ENCODE measurements at regions of chr2 and their contacts with region 1.

Region 1: GRCh38 chr2:97747716-97748115 is 34.3 kb downstream of the ZAP70 start:
- DNase-seq: no peak
- ATAC-seq: peak; percentile 5 to 21 (median 19)
- H3K4me3 ChIP-seq: no peak overlapping the region
- H3K4me3 Mint-ChIP-seq: peak overlapping the region; percentile 62
- H3K27ac ChIP-seq: peak overlapping the region; percentile 55
- H3K27ac Mint-ChIP-seq: peak overlapping the region; percentile 80 to 94
- H3K4me1 ChIP-seq: peaks cover 56% of the 10 kb centered on the region
- H3K4me1 Mint-ChIP-seq: peaks cover 68 to 80% of the 10 kb centered on the region in 2 donors
- H3K27me3 ChIP-seq: no peaks in the 10 kb centered on the region
- H3K27me3 Mint-ChIP-seq: no peaks in the 10 kb centered on the region
- CTCF ChIP-seq: no peak

Region 2: GRCh38 chr2:97697252-97698235 is 50.2 kb before region 1 on chr2:
- intact Hi-C with region 1: loop called (anchors 1 kb)
- DNase-seq: peak; percentile 89 to 94
- ATAC-seq: peak; percentile 89 to 93 (median 91)
- H3K4me3 ChIP-seq: no peak overlapping the region
- H3K4me3 Mint-ChIP-seq: no peak overlapping the region
- H3K27ac ChIP-seq: no peak overlapping the region
- H3K27ac Mint-ChIP-seq: no peak overlapping the region
- H3K4me1 ChIP-seq: no peaks in the 10 kb centered on the region
- H3K4me1 Mint-ChIP-seq: peaks cover 4 to 5% of the 10 kb centered on the region in 2 donors
- H3K27me3 ChIP-seq: no peaks in the 10 kb centered on the region
- H3K27me3 Mint-ChIP-seq: peaks cover 4 to 10% of the 10 kb centered on the region in 2 donors
- CTCF ChIP-seq: peak; percentile 90

Region 3: GRCh38 chr2:97710596-97711386 is 36.9 kb before region 1 on chr2:
- intact Hi-C with region 1: loop called (anchors 1 kb)
- DNase-seq: peak in 1 of 2 donors; percentile 45
- ATAC-seq: no peak
- H3K4me3 ChIP-seq: no peak overlapping the region
- H3K4me3 Mint-ChIP-seq: no peak overlapping the region
- H3K27ac ChIP-seq: no peak overlapping the region
- H3K27ac Mint-ChIP-seq: peak overlapping the region in 1 of 2 donors; percentile 97
- H3K4me1 ChIP-seq: peaks cover 53% of the 10 kb centered on the region
- H3K4me1 Mint-ChIP-seq: peaks cover 50 to 61% of the 10 kb centered on the region in 2 donors
- H3K27me3 ChIP-seq: no peaks in the 10 kb centered on the region
- H3K27me3 Mint-ChIP-seq: no peaks in the 10 kb centered on the region
- CTCF ChIP-seq: no peak

Region 4: GRCh38 chr2:97718051-97718882 is 29.4 kb before region 1 on chr2:
- intact Hi-C with region 1: loop called (anchors 1 kb)
- DNase-seq: peak; percentile 72 to 88
- ATAC-seq: peak; percentile 65 to 76 (median 76)
- H3K4me3 ChIP-seq: peak overlapping the region; percentile 69
- H3K4me3 Mint-ChIP-seq: peak overlapping the region; percentile 94
- H3K27ac ChIP-seq: peak overlapping the region; percentile 71
- H3K27ac Mint-ChIP-seq: peak overlapping the region; percentile 97
- H3K4me1 ChIP-seq: peaks cover 87% of the 10 kb centered on the region
- H3K4me1 Mint-ChIP-seq: peaks cover 89 to 91% of the 10 kb centered on the region in 2 donors
- H3K27me3 ChIP-seq: no peaks in the 10 kb centered on the region
- H3K27me3 Mint-ChIP-seq: no peaks in the 10 kb centered on the region
- CTCF ChIP-seq: no peak

Region 5: GRCh38 chr2:97761192-97761591 is 13.5 kb after region 1 on chr2:
- intact Hi-C with region 1: no loop called
- DNase-seq: peak; percentile 31 to 67
- ATAC-seq: peak; percentile 77 to 84 (median 78)
- H3K4me3 ChIP-seq: peak overlapping the region; percentile 11
- H3K4me3 Mint-ChIP-seq: peak overlapping the region; percentile 69
- H3K27ac ChIP-seq: peak overlapping the region; percentile 71
- H3K27ac Mint-ChIP-seq: peak overlapping the region; percentile 84 to 87
- H3K4me1 ChIP-seq: peaks cover 40% of the 10 kb centered on the region
- H3K4me1 Mint-ChIP-seq: peaks cover 37 to 45% of the 10 kb centered on the region in 2 donors
- H3K27me3 ChIP-seq: no peaks in the 10 kb centered on the region
- H3K27me3 Mint-ChIP-seq: no peaks in the 10 kb centered on the region
- CTCF ChIP-seq: no peak